ENCODE measurements at regions of chr11 and their contacts with region 1.

Region 1: GRCh38 chr11:57800444-57801182 is 39.0 kb downstream of the CTNND1 start:
- DNase-seq: peak; percentile 98
- ATAC-seq: peak; percentile 97
- H3K4me3 ChIP-seq: no peak overlapping the region
- H3K27ac ChIP-seq: peak overlapping the region; percentile 43
- H3K4me1 ChIP-seq: peaks cover 42% of the 10 kb centered on the region
- H3K27me3 ChIP-seq: no peaks in the 10 kb centered on the region
- CTCF ChIP-seq: peak; percentile 89
- EP300 ChIP-seq: peak in 1 of 2 experiments; percentile 88; a peak in 3 of 4 replicates
- POLR2A ChIP-seq: no peak
- RAD21 ChIP-seq: peak; percentile 94

Region 2: DNA sequence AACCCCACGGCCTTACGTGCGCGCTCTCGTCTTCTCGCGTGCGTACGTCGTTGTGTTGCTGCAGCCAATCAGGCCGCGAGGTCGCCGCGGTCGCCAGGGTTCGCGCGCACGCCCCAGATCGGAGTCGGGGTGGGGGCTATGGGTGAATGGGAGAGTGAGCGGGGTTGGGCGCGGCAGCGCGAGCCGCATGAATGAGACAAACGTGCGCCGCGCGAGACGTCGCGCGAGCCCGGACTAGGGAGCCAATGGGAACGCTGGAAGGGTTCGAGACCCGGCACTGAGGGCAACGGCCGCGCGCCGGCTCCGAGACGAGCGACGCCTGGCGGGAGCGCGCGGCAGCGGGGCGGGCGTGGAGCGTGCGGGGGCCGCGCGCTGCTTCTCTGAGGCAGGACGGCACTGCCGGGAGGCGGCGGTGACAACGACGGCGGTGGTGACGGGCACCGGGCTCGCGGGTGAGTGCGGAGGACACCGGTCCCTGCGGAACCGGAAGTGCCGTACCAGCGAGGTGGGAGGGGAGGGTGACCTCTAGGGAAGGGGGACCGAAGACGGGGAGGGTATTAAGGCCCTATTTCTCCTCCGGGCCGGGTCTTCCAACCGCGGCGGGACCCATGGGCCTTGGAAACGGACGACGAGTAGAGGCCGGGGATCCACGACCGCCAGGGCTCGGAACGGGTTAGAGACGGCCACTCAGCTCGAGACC is 132.7 kb before region 1 on chr11 and contains the start of gene ZDHHC5:
- CTCF ChIA-PET with region 1: no interaction called
- POLR2A ChIA-PET with region 1: no interaction called
- in situ Hi-C with region 1: no loop called
- intact Hi-C with region 1: loop called (anchors 10 kb)
- DNase-seq: peak; percentile 97
- ATAC-seq: peak; percentile 92
- H3K4me3 ChIP-seq: peak within 1 kb of the TSS; percentile 81 to 91 (median 88)
- H3K27ac ChIP-seq: peak within 1 kb of the TSS; percentile 98
- H3K4me1 ChIP-seq: peaks cover 35% of the 10 kb centered on the region
- H3K27me3 ChIP-seq: no peaks in the 10 kb centered on the region; a peak in 1 of 5 replicates
- CTCF ChIP-seq: peak; percentile 57; the same call in 1 of the 2 replicates
- EP300 ChIP-seq: no peak; a peak in 1 of 4 replicates
- POLR2A ChIP-seq: peak; percentile 59 to 88
- RAD21 ChIP-seq: peak; percentile 49; the same call in 1 of the 2 replicates
- total RNA-seq, gene ZDHHC5: 20.3 and 26.6 TPM in 2 replicates

Region 3: DNA sequence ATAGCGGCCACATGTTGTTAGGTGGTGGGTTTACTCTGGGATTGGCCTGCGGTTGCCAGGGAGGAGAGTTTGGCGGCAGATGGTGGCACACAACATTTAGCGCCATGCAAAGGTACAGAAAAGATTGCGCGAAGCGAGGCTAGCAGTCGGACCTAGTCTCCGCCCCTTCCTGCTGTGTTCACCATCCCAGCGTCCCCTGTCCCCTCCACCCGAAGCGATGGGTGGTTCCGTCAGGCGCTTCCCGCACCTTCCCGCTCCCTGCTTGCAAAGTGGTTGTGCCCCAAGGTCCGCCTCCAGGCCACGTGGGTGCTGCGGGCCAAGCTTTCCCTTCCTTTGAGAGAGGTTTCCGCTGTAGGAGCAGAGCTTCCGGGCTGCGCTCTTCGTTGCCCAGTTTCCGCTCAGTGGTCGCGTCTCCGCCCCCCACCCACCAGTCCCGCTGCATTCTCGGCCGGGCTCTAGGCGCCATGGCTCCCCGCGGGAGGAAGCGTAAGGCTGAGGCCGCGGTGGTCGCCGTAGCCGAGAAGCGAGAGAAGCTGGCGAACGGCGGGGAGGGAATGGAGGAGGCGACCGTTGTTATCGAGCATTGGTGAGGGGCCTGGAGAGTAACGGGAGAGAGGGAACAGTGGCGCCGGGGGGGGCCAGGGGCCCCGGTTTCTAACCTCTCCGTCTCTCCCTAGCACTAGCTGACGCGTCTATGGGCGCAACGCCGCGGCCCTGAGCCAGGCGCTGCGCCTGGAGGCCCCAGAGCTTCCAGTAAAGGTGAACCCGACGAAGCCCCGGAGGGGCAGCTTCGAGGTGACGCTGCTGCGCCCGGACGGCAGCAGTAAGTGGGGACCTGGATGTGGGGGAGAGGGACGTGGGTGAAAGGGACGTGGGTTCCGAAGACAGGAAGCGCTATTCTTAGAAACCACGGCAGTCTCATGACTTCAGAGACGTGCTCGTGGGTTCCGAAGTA is 59.2 kb before region 1 on chr11 and contains the start of gene SELENOH:
- CTCF ChIA-PET with region 1: no interaction called
- POLR2A ChIA-PET with region 1: interaction called, 12 read pairs
- in situ Hi-C with region 1: no loop called
- intact Hi-C with region 1: no loop called
- DNase-seq: peak; percentile 84
- ATAC-seq: peak; percentile 94
- H3K4me3 ChIP-seq: peak within 1 kb of the TSS; percentile 58 to 78 (median 78)
- H3K27ac ChIP-seq: peak within 1 kb of the TSS; percentile 80
- H3K4me1 ChIP-seq: peaks cover 7% of the 10 kb centered on the region; the same call in 1 of the 2 replicates
- H3K27me3 ChIP-seq: no peaks in the 10 kb centered on the region
- CTCF ChIP-seq: peak; percentile 10; the same call in 1 of the 2 replicates
- EP300 ChIP-seq: no peak
- POLR2A ChIP-seq: peak; percentile 49 to 76
- RAD21 ChIP-seq: peak; percentile 53
- total RNA-seq, gene SELENOH: 70.2 and 77.4 TPM in 2 replicates

Region 4: DNA sequence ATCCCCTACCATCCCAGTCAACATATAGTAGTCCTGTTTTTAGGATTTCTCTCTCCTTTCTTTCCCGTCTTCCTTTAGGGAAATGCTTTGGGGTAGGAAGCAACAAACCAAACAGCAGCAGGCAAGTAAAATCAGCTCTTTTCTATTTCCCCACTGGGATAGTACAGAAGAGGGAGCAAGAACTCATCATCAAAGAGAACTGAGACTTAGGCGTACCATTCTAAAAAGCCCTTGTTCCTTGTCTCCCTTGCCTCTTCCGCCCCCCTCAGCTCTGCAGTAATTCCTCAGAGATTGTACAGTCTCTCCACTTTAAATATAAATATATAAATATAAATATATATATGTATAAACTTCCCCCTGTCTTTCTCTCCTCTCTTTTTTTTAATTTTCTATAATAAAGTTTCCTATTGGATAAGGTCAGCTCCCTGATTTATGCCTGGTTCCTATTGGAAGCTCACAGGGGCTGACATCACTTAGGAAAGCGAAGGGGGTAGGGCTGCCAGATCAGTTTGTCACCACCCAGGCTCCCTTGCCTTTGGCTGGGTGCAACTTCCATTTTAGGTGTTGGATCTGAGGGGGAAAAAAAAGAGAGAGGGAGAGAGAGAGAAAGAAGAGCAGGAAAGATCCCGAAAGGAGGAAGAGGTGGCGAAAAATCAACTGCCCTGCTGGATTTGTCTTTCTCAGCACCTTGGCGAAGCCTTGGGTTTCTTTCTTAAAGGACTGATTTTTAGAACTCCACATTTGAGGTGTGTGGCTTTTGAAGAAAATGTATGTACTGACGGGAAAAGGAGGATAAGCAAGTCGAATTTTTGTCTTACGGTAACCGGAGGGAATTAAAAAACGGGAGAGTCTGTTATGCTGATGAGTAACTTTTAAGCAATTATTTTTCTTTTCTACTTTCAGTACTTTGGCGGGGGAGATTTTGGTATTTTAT is 39.0 kb before region 1 on chr11 and contains the start of gene CTNND1:
- CTCF ChIA-PET with region 1: interaction called, 9 read pairs
- POLR2A ChIA-PET with region 1: interaction called, 83 read pairs
- in situ Hi-C with region 1: loop called (anchors 5 kb)
- intact Hi-C with region 1: loop called (anchors 1 kb)
- DNase-seq: peak; percentile 97
- ATAC-seq: peak; percentile 95
- H3K4me3 ChIP-seq: peak within 1 kb of the TSS; percentile 80 to 97 (median 88)
- H3K27ac ChIP-seq: peak within 1 kb of the TSS; percentile 99
- H3K4me1 ChIP-seq: peaks cover 49% of the 10 kb centered on the region
- H3K27me3 ChIP-seq: no peaks in the 10 kb centered on the region; a peak in 1 of 5 replicates
- CTCF ChIP-seq: no peak
- EP300 ChIP-seq: peak in 1 of 2 experiments; percentile 4; a peak in 1 of 4 replicates
- POLR2A ChIP-seq: peak; percentile 68 to 87
- RAD21 ChIP-seq: no peak
- total RNA-seq, gene CTNND1: 128 and 184 TPM in 2 replicates

Region 5: GRCh38 chr11:57974848-57975601 is 174.4 kb after region 1 on chr11:
- CTCF ChIA-PET with region 1: no interaction called
- POLR2A ChIA-PET with region 1: no interaction called
- in situ Hi-C with region 1: no loop called
- intact Hi-C with region 1: loop called (anchors 10 kb)
- DNase-seq: no peak
- ATAC-seq: no peak
- H3K4me3 ChIP-seq: no peak overlapping the region
- H3K27ac ChIP-seq: no peak overlapping the region
- H3K4me1 ChIP-seq: peaks cover 86% of the 10 kb centered on the region
- H3K27me3 ChIP-seq: no peaks in the 10 kb centered on the region
- CTCF ChIP-seq: no peak
- EP300 ChIP-seq: no peak
- POLR2A ChIP-seq: no peak
- RAD21 ChIP-seq: no peak

Measured in HepG2 (cell line).